ENCODE measurements at regions of chr5 and their contacts with region 1.

Region 1: GRCh38 chr5:151164686-151165392 is 7.3 kb upstream of the ANXA6 start:
- DNase-seq: peak; percentile 88
- H3K4me3 ChIP-seq: no peak overlapping the region
- H3K27ac ChIP-seq: no peak overlapping the region
- H3K4me1 ChIP-seq: peaks cover 21% of the 10 kb centered on the region
- CTCF ChIP-seq: peak; percentile 99

Region 2: DNA sequence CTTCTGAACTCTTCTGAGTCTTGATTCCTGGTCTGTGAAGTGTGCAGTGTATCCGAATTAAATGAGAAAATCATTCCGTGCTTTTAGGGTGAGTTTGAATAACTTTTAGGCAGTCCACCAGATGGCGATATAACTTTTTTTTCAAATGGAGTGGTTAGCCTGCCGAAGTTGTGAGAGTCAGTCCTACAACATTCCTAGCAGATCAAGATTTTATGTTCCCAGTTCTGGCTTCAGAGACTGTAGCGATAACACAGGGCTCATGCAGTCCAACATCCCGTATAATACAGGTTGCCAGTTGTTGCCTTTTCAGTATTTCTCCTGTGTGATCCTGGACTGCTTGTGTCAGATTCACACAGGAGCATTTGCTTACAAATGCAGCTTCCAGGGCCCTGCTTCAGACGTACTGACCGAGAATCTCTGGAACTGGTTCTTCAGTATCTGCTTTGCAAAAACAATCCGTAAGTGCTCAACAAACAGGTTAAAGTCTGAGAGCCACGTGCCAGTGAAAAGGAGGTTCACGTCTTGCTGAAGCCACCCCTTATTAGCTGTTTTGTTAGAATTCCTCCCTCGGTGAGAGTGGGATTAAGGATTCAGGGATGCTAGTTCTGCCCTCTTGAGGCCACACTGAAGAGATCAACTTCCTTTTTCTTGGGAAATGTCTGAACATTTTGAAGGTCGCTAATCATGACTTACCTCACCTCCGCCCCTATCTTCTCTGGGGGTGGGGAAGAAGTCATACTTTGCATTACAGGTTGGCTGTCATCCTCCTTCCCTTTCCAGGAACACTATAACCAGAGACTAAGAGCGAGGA is 363.5 kb before region 1 on chr5:
- CTCF ChIA-PET with region 1: no interaction called
- POLR2A ChIA-PET with region 1: interaction called, 3 read pairs
- intact Hi-C with region 1: loop called (anchors 2 kb)
- DNase-seq: peak; percentile 49
- H3K4me3 ChIP-seq: no peak overlapping the region
- H3K27ac ChIP-seq: no peak overlapping the region
- H3K4me1 ChIP-seq: no peaks in the 10 kb centered on the region
- CTCF ChIP-seq: peak; percentile 81

Region 3: GRCh38 chr5:151051066-151051930 is 113.5 kb before region 1 on chr5:
- CTCF ChIA-PET with region 1: interaction called, 12 read pairs
- POLR2A ChIA-PET with region 1: interaction called, 7 read pairs
- intact Hi-C with region 1: loop called (anchors 1 kb)
- DNase-seq: peak; percentile 87
- H3K4me3 ChIP-seq: no peak overlapping the region
- H3K27ac ChIP-seq: no peak overlapping the region
- H3K4me1 ChIP-seq: peaks cover 7% of the 10 kb centered on the region
- CTCF ChIP-seq: peak; percentile 97

Region 4: DNA sequence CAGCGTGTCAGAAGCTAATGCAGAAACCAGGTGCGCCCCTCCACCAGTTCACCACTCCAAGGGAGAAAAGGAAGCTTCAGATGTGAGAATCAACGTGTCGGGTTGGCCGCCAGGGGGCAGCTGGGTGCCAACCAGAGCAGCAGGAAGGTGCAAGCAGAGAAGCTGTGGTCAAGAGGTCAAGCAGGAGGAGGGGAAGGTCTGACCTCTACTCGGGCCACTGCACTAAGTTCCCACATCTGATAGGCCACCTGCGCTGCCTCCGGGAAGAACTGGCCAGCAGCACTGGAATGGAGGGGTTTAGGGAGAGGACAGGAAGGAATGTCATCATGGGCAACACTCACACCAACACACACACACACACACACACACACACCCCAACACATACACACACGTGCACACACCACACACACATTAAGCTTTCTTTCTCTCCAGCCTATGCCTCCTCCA is 38.6 kb before region 1 on chr5:
- CTCF ChIA-PET with region 1: interaction called, 33 read pairs
- POLR2A ChIA-PET with region 1: interaction called, 14 read pairs
- intact Hi-C with region 1: loop called (anchors 1 kb)
- DNase-seq: peak; percentile 83
- H3K4me3 ChIP-seq: no peak overlapping the region
- H3K27ac ChIP-seq: peak overlapping the region; percentile 86
- H3K4me1 ChIP-seq: peaks cover 91% of the 10 kb centered on the region
- CTCF ChIP-seq: peak; percentile 94

Region 5: DNA sequence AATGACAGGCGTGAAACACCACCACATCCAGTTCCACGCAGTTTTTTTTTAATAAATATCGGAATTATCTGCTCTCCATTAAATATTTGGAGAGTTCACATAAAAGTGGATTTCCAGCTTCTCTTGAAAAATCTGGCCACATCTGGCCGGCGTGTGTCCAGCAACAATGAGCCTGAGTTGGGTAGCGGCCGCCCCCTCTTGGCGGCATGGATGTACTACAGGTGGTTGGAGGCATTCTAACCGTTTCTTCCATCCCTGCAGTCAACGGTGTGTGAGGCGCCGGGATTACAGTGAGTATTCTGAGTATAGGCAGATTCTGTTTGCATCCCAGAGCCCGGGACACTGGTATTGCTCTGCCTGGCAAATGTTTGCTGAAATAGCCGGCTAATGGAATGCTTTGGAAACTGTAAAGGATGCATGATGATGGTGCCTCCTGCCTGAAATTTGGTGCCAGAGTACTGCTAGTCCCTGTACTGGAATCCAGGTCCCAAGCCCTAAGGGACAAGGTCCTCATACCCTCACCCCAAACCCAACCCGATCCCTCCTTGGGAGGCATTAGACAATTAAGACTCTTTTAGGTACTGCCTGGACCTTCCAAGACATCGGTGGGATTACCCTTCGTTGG is 74.5 kb after region 1 on chr5:
- CTCF ChIA-PET with region 1: interaction called, 12 read pairs
- POLR2A ChIA-PET with region 1: interaction called, 14 read pairs
- intact Hi-C with region 1: loop called (anchors 1 kb)
- DNase-seq: peak; percentile 81
- H3K4me3 ChIP-seq: peak overlapping the region; percentile 49
- H3K27ac ChIP-seq: peak overlapping the region; percentile 72
- H3K4me1 ChIP-seq: peaks cover 79% of the 10 kb centered on the region
- CTCF ChIP-seq: peak; percentile 99

Region 6: GRCh38 chr5:151298063-151298855 is 133.4 kb after region 1 on chr5:
- CTCF ChIA-PET with region 1: no interaction called
- POLR2A ChIA-PET with region 1: no interaction called
- intact Hi-C with region 1: no loop called
- DNase-seq: peak; percentile 68
- H3K4me3 ChIP-seq: no peak overlapping the region
- H3K27ac ChIP-seq: no peak overlapping the region
- H3K4me1 ChIP-seq: no peaks in the 10 kb centered on the region
- CTCF ChIP-seq: peak; percentile 73

Region 7: GRCh38 chr5:151651997-151652645 is 487.3 kb after region 1 on chr5:
- CTCF ChIA-PET with region 1: no interaction called
- POLR2A ChIA-PET with region 1: no interaction called
- intact Hi-C with region 1: no loop called
- DNase-seq: peak; percentile 73
- H3K4me3 ChIP-seq: no peak overlapping the region
- H3K27ac ChIP-seq: no peak overlapping the region
- H3K4me1 ChIP-seq: no peaks in the 10 kb centered on the region
- CTCF ChIP-seq: peak; percentile 87